ENCODE measurements at regions of chr1 and their contacts with region 1.

Region 1: DNA sequence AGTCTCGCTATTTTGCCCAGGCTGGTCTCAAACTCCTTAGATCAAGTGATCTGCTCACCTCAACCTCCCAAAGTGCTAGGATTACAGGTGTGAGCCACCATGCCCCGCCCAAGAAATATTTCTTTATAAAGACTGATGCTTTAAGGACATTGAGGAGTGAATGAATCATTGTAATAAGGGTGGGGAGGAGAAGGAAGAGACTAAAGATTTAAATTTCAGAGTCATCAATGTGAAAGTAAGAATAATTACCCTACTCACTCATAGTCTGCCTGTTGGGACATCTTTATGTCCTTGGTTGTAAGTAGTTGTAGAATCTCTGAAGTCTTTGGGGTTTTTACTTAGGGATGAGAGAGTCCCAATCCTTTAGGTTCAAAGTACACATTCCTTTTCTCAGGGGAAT is 7.3 kb downstream of the KDM1A start:
- DNase-seq: no peak
- ATAC-seq: no peak
- H3K4me3 ChIP-seq: no peak overlapping the region
- H3K27ac ChIP-seq: no peak overlapping the region
- H3K4me1 ChIP-seq: no peaks in the 10 kb centered on the region; the same call in 1 of the 2 replicates
- H3K27me3 ChIP-seq: no peaks in the 10 kb centered on the region
- CTCF ChIP-seq: no peak
- POLR2A ChIP-seq: no peak
- RAD21 ChIP-seq: no peak

Region 2: GRCh38 chr1:22963044-22963677 is 63.4 kb before region 1 on chr1:
- CTCF ChIA-PET with region 1: no interaction called
- POLR2A ChIA-PET with region 1: no interaction called
- dilution Hi-C with region 1: no loop called
- in situ Hi-C with region 1: no loop called
- intact Hi-C with region 1: no loop called
- DNase-seq: no peak
- ATAC-seq: no peak
- H3K4me3 ChIP-seq: no peak overlapping the region
- H3K27ac ChIP-seq: no peak overlapping the region
- H3K4me1 ChIP-seq: no peaks in the 10 kb centered on the region
- H3K27me3 ChIP-seq: peaks cover 40% of the 10 kb centered on the region
- CTCF ChIP-seq: no peak
- POLR2A ChIP-seq: no peak
- RAD21 ChIP-seq: no peak

Region 3: DNA sequence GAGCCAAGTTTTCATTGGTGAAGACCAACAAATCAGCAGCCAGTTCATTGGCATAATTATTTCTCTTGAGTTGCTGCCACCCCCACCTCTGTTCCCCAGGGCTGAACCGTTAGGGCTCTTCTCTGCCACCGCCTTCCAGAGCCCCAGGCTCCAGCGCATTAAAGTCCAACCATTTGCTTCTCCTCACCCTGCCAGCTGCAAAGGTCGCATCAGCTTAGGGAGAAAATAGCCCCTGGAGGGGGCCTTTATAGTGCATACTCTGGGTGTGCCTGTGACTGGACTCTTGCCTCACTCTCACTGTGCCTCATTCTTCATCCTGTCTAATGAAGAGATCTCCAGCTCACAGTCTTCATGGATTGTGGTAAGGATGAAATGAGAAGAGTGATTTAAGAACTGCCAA is 43.1 kb after region 1 on chr1:
- CTCF ChIA-PET with region 1: no interaction called
- POLR2A ChIA-PET with region 1: no interaction called
- dilution Hi-C with region 1: no loop called
- in situ Hi-C with region 1: no loop called
- intact Hi-C with region 1: loop called (anchors 2 kb)
- DNase-seq: no peak
- ATAC-seq: no peak
- H3K4me3 ChIP-seq: no peak overlapping the region
- H3K27ac ChIP-seq: no peak overlapping the region
- H3K4me1 ChIP-seq: no peaks in the 10 kb centered on the region
- H3K27me3 ChIP-seq: no peaks in the 10 kb centered on the region
- CTCF ChIP-seq: no peak
- POLR2A ChIP-seq: no peak
- RAD21 ChIP-seq: no peak

Measured in IMR-90 (cell line).